Head of caudate nucleus (tissue), 42 donors: ENCODE measurements at regions of chr14 and their contacts with region 1.

Region 1: GRCh38 chr14:96001866-96002497 is 37.2 kb upstream of the C14orf132 start:
- DNase-seq: no peak

Region 2: GRCh38 chr14:96275177-96276112 is 273.5 kb after region 1 on chr14:
- intact Hi-C with region 1: loop called (anchors 5 kb)
- DNase-seq: peak; percentile 70 to 96 (median 88)